MCF 10A (cell line): ENCODE measurements at regions of chr9 and their contacts with region 1.

Region 1: DNA sequence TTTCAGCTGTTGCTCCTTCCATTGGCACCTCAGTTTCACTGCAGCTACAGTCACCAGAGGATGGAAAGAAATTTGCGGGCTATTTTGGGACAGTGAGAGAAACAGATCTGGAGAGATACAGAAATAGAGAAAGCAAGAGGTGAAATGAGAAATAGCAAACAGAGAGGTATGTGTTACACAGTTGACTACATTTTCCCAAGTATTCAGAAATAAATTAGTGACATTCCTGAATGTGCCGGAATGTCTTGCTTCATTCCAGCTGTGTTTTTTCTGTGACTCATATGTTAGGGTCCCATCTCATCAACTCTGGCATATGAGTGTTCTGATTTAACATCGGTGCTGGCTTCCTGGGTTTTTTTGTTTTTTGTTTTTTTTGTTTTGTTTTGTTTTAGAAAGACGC is 63.8 kb upstream of the ZNF462 start:
- DNase-seq: peak; percentile 79
- H3K4me3 Mint-ChIP-seq: no peak overlapping the region
- H3K27ac Mint-ChIP-seq: no peak overlapping the region
- H3K4me1 Mint-ChIP-seq: peaks cover 32% of the 10 kb centered on the region
- H3K27me3 Mint-ChIP-seq: no peaks in the 10 kb centered on the region
- CTCF ChIP-seq: no peak

Region 2: DNA sequence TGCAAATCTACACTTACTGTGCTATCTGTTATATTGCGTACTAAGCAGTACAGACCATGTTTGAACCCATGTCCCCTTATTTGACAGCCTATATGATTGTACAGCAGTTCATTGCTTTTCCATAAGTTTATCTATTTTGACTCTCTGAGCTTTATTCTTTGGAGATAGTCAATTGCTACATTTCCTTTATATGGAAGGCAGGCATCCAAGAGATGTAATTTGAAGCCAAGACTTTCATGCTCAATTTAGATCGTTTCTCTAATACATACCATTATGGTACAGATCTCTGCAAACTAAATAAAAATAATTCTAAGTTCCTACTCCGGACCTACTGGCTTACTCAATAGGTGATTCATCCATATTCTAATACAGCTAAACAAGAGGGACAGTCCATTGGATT is 680.0 kb before region 1 on chr9:
- CTCF ChIA-PET with region 1: no interaction called
- POLR2A ChIA-PET with region 1: no interaction called
- intact Hi-C with region 1: no loop called
- DNase-seq: peak; percentile 7
- H3K4me3 Mint-ChIP-seq: no peak overlapping the region
- H3K27ac Mint-ChIP-seq: no peak overlapping the region
- H3K4me1 Mint-ChIP-seq: no peaks in the 10 kb centered on the region
- H3K27me3 Mint-ChIP-seq: no peaks in the 10 kb centered on the region
- CTCF ChIP-seq: no peak

Region 3: DNA sequence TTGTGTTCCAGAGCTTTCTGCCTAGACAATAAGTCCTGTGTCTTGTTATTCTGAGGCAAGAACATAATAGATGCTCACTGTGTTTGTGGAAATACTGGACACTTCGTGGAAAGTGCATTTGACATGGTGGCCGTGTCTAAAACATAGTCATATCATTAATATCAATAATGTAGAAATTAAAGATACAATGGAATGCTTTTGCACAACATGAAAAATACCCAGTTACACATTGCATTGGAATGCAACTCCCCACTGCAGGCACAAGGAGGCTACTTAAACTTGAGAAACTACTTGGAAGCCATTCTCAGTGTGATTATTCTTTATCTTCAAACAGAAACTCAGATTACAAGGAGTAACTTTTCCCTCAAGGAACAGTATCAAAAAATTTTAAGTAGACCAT is 81.5 kb before region 1 on chr9:
- CTCF ChIA-PET with region 1: interaction called, 3 read pairs
- POLR2A ChIA-PET with region 1: no interaction called
- intact Hi-C with region 1: loop called (anchors 5 kb)
- DNase-seq: peak; percentile 67
- H3K4me3 Mint-ChIP-seq: peak overlapping the region; percentile 5
- H3K27ac Mint-ChIP-seq: peak overlapping the region; percentile 52
- H3K4me1 Mint-ChIP-seq: peaks cover 20% of the 10 kb centered on the region
- H3K27me3 Mint-ChIP-seq: no peaks in the 10 kb centered on the region
- CTCF ChIP-seq: peak; percentile 11

Region 4: DNA sequence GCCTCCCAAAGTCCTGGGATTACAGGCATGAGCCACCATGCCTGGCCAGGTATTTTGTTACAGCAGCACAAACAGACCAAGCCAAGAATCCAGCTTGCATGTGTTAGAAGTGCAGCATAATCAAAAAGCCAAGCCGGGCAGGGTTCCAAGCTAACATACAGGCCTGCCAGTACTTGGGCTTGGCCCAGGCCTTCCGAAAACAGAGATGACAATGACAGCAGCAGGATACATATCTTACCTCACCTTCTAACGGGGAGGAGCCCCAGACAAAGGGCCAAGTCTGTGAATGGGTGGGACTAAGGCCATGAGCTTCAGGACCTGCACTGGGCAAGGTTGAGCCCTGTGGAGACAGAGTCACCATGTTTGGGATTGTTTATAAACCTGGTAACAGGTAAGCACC is 27.5 kb before region 1 on chr9:
- CTCF ChIA-PET with region 1: interaction called, 3 read pairs
- POLR2A ChIA-PET with region 1: interaction called, 8 read pairs
- intact Hi-C with region 1: loop called (anchors 2 kb)
- DNase-seq: peak; percentile 5
- H3K4me3 Mint-ChIP-seq: no peak overlapping the region
- H3K27ac Mint-ChIP-seq: no peak overlapping the region
- H3K4me1 Mint-ChIP-seq: peaks cover 13% of the 10 kb centered on the region
- H3K27me3 Mint-ChIP-seq: no peaks in the 10 kb centered on the region
- CTCF ChIP-seq: no peak

Region 5: GRCh38 chr9:106846857-106847256 is 47.7 kb after region 1 on chr9:
- CTCF ChIA-PET with region 1: interaction called, 3 read pairs
- POLR2A ChIA-PET with region 1: no interaction called
- intact Hi-C with region 1: loop called (anchors 5 kb)
- DNase-seq: peak; percentile 80
- H3K4me3 Mint-ChIP-seq: no peak overlapping the region
- H3K27ac Mint-ChIP-seq: no peak overlapping the region
- H3K4me1 Mint-ChIP-seq: peaks cover 6% of the 10 kb centered on the region
- H3K27me3 Mint-ChIP-seq: no peaks in the 10 kb centered on the region
- CTCF ChIP-seq: no peak